Cardiac septum (tissue), 1 donor: ENCODE measurements at regions of chr6 and their contacts with region 1.

Region 1: DNA sequence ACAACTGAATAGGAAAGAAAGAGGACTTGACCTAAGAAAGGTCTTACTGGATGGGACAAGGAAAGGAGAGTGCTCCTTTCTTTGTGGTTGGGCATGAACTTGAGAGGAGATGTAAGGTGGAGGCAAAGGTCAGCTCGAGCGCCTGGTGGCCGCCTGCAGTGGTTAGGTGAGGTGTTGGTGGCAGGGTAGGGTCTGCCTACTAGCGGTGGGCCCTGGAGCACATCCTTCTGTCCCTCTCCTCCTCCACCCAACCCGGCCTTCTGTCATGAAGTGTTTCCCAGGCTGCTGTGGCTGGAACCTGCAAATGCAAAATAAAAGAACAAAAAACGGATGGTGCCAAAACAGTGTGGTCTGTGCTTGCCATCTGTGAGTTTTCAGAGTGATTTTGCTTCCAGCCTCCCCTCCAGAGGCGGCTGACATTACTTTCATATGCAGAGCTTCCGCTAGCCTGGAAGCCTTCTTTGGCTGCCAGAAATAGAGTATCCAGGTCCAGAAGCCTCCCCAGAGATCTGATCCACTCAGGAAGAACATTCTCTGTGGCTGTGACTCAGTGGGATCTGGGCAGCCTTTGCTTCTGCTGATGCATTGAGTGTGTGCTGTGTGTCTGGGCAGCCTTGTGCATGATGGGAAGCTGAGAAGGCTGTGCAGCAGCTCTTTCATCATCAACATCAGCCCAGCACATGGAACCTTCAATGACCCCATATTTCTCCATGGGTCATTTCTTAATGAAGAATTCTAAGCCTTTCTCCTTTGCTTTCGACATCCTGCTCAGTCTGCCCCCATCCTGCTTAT is 79.8 kb upstream of the FAM184A start:
- DNase-seq: peak; percentile 78

Region 2: GRCh38 chr6:119349323-119350042 is 191.2 kb after region 1 on chr6 and contains the start of gene MAN1A1:
- intact Hi-C with region 1: loop called (anchors 5 kb)
- DNase-seq: peak; percentile 95
- total RNA-seq, gene MAN1A1: 15.0 TPM

Region 3: GRCh38 chr6:119742188-119742803 is 584.0 kb after region 1 on chr6:
- intact Hi-C with region 1: loop called (anchors 10 kb)
- DNase-seq: peak; percentile 74